ENCODE measurements at regions of chr1 and their contacts with region 1.

Region 1: GRCh38 chr1:151510957-151511635 is at the start of gene CGN:
- DNase-seq: peak; percentile 51 to 91
- H3K4me3 ChIP-seq: peak within 1 kb of the TSS; percentile 68 to 78
- H3K27ac ChIP-seq: peak within 1 kb of the TSS; percentile 68 to 69
- H3K4me1 ChIP-seq: peaks cover 0 to 13% of the 10 kb centered on the region in 2 donors
- H3K27me3 ChIP-seq: no peaks in the 10 kb centered on the region
- CTCF ChIP-seq: no peak
- total RNA-seq, gene CGN: not detected

Region 2: DNA sequence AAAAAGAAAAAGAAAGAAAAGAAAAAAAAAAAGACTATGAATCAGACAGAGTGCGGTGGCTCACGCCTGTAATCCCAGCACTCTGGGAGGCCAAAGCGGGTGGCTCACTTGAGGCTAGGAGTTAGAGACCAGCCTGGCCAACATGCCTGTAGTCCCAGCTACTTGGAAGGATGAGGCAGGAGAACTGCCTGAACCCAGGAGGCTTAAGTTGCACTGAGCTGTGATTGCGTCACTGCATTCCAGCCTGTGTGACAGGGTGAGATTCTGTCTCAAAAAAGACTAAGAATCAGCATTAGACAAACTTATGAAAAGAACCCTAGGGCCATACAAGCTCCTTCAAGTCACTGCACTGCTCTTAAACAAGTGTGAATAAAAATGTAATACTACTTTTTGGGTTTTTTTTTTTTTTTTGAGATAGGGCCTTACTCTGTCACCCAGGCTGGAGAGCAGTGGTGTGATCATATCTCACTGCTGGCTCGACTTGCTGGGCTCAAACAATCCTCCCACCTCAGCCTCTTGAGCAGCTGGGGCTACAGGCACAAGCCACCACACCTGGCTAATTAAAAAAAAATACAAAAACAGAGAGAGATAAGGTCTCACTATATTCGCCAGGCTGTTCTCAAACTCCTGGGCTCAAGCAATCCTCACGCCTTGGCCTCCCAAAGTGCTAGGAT is 94.7 kb before region 1 on chr1:
- intact Hi-C with region 1: no loop called
- DNase-seq: no peak
- H3K4me3 ChIP-seq: no peak overlapping the region
- H3K27ac ChIP-seq: no peak overlapping the region
- H3K4me1 ChIP-seq: no peaks in the 10 kb centered on the region
- H3K27me3 ChIP-seq: no peaks in the 10 kb centered on the region
- CTCF ChIP-seq: no peak

Region 3: DNA sequence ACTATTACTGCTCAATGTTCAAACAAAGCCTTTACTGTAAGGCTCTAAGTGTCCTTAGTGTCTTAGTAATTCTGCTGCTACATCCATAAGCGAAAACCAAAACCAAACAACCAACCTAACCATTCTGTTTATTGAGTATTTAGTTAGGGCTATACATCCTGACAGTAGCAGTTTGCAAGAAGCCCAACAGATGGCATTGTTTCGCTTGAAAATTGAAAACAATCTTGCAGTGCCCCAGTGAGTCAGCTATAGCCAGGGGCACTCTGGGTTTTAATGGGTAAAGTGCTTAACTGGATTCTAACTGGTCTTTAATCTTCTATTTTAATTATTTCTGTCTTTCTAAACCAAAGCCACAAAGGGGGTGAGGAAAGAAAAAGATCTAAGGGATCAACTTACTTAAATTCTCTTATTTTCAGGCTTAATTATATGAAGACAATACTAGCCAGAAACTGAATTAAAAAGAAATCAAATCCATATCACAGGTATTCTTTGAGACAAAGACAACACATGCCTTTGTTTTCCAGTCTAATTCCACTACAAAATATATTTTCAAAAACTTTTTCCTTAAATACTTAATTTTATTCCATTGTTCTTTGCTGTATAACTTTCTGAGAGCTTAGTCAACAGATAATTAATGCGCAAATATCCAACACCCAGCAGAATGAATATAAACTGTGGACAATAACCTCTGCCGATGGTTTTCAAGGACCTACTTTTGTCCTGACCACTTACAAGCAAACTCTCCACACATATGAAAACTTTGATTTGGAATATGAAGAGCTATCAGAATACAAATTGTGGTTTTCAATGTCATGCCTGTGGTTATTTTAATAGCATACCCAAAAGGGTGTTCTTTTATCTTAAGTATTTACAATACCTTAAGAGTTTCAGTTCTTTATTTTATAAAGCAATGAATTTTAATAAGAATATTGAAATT is 67.0 kb before region 1 on chr1:
- intact Hi-C with region 1: loop called (anchors 5 kb)
- DNase-seq: peak in 1 of 2 donors; percentile 78
- H3K4me3 ChIP-seq: peak overlapping the region in 1 of 2 donors; percentile 9
- H3K27ac ChIP-seq: no peak overlapping the region
- H3K4me1 ChIP-seq: peaks cover 0 to 27% of the 10 kb centered on the region in 2 donors
- H3K27me3 ChIP-seq: no peaks in the 10 kb centered on the region
- CTCF ChIP-seq: peak; percentile 69 to 72 (median 69)

Region 4: DNA sequence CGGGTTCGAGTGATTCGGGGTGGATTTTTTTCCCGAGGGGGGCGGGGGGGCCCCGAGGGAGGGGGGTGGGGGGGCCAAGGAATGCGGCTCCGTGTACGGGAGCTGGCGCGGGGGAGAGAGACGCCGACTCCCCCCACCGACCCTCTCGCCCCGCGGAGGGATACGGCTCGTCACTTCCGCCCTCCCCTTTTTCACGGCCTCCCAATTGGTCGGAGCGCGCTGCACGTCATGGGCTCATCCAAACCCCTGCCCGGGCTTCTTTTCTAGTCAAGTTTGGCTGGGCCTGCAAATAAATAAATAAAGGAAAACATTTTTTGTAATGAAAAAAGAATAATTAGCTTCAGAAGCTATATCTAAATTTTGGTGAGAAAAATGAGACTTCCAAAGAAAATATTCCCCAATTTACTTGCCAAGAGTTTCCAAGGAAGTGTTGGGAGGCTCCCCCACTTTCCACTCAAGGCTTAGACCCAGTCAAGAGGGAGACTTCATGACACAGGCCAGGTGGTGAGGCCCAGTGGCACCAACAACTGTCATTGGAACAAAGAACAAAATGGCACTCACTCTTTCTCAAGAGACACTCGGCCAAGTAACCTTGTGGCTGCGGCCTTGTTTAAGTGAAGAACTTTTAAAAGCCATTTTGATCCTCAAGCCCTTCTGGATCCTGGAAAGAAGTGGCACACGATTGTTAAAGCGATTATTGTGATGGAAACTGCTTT is 51.6 kb before region 1 on chr1 and contains the start of gene POGZ:
- intact Hi-C with region 1: loop called (anchors 2 kb)
- DNase-seq: peak; percentile 73 to 98
- H3K4me3 ChIP-seq: peak within 1 kb of the TSS; percentile 85 to 99
- H3K27ac ChIP-seq: peak within 1 kb of the TSS; percentile 98 to 100
- H3K4me1 ChIP-seq: peaks cover 4 to 17% of the 10 kb centered on the region in 2 donors
- H3K27me3 ChIP-seq: no peaks in the 10 kb centered on the region
- CTCF ChIP-seq: no peak
- total RNA-seq, gene POGZ: 18.1 TPM

Region 5: GRCh38 chr1:151472856-151473731 is 38.0 kb before region 1 on chr1:
- intact Hi-C with region 1: loop called (anchors 1 kb)
- DNase-seq: peak in 1 of 2 donors; percentile 70
- H3K4me3 ChIP-seq: peak overlapping the region; percentile 55 to 77
- H3K27ac ChIP-seq: peak overlapping the region; percentile 56 to 74
- H3K4me1 ChIP-seq: peaks cover 0 to 4% of the 10 kb centered on the region in 2 donors
- H3K27me3 ChIP-seq: no peaks in the 10 kb centered on the region
- CTCF ChIP-seq: no peak

Region 6: GRCh38 chr1:151539990-151540981 is 29.2 kb after region 1 on chr1 and contains the start of gene TUFT1:
- intact Hi-C with region 1: loop called (anchors 1 kb)
- DNase-seq: peak; percentile 84 to 97
- H3K4me3 ChIP-seq: peak within 1 kb of the TSS; percentile 63 to 79
- H3K27ac ChIP-seq: peak within 1 kb of the TSS; percentile 71 to 75
- H3K4me1 ChIP-seq: peaks cover 4 to 25% of the 10 kb centered on the region in 2 donors
- H3K27me3 ChIP-seq: no peaks in the 10 kb centered on the region
- CTCF ChIP-seq: no peak
- total RNA-seq, gene TUFT1: 2.3 TPM

Region 7: GRCh38 chr1:151710187-151710840 is 199.2 kb after region 1 on chr1:
- intact Hi-C with region 1: no loop called
- DNase-seq: no peak
- H3K4me3 ChIP-seq: no peak overlapping the region
- H3K27ac ChIP-seq: no peak overlapping the region
- H3K4me1 ChIP-seq: no peaks in the 10 kb centered on the region
- H3K27me3 ChIP-seq: no peaks in the 10 kb centered on the region
- CTCF ChIP-seq: no peak